OCI-LY7 (cell line): ENCODE measurements at regions of chr14 and their contacts with region 1.

Region 1: DNA sequence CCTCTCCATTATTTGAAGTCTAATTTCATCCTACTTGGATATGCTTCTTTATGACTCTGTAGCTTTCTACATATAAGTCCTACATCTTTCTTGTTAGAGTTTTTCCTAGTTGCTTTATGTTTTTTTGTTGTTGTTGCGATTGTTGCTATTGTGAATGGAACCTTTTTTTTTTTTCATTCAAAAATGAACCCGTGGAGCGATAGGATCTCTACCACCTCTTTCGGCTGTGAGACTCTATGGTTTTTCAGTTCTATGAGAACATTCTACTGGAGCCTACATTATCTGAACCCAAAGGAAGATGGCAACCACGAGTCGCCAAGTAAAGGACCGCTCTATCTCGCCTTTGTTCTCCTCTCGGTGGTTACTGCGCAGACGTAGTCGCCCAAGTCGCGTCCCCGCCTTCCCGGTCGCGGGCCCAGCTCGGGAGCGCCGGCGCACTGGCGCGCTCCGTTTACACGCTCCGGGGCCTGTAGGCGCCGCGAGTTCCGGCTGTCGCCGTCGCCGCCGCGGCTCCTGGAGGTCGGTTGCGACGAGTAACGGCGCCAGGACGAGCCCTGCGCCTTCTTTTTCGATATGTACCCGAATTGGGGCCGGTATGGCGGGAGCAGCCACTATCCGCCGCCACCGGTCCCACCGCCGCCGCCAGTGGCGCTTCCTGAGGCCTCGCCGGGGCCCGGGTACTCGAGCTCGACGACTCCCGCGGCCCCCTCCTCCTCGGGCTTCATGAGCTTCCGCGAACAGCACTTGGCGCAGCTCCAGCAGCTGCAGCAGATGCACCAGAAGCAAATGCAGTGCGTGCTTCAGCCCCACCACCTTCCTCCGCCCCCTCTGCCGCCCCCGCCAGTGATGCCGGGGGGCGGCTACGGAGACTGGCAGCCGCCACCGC is at the start of gene YLPM1:
- DNase-seq: peak; percentile 98
- H3K4me3 ChIP-seq: peak within 1 kb of the TSS; percentile 95
- H3K27ac ChIP-seq: peak within 1 kb of the TSS; percentile 72
- H3K4me1 ChIP-seq: peaks cover 39% of the 10 kb centered on the region
- CTCF ChIP-seq: peak; percentile 81
- total RNA-seq, gene YLPM1: 45.2 and 54.3 TPM in 2 replicates

Region 2: DNA sequence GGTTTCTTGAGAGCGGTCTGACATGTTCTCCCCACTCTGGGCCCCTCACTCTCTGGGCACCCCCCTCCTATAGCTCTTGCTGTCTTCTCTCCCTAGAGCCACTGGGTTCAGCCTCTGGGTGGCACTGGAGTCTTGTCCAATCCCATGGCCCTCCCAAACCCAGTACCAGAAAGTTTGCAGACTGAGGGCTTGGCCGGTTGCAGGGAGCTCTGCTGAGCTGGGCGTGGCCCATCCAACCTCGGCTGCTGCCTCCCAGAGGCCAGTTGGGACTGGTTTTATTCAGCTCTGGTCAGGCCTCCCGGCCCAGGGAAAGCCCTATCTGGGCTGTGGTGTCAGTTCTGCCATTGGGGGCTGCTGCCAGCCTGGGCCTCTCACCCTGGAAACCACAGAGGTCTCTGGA is 231.7 kb before region 1 on chr14:
- CTCF ChIA-PET with region 1: no interaction called
- POLR2A ChIA-PET with region 1: no interaction called
- intact Hi-C with region 1: no loop called
- DNase-seq: no peak
- H3K4me3 ChIP-seq: no peak overlapping the region
- H3K27ac ChIP-seq: no peak overlapping the region
- H3K4me1 ChIP-seq: peaks cover 4% of the 10 kb centered on the region
- CTCF ChIP-seq: 0 out of 2 replicates have a peak, but pooled peaks have one; percentile 20

Region 3: DNA sequence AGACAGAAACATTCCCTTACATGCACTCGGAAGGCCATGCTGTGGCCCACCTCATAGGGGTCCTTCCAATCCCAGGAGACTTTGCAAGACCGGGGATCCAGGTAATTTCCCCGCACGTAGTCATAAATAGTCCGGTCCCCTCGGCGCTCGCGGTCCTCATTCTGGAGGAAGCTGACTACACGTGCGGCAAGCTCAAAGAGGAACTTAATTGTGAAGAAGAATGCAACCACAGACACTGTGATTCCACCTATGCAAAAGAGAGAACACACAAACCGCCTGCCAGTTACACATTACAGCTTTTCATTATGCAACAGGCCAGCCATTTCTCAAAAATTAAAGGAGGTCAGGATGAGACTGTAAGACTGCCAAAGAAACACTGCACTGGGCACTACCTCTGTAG is 78.7 kb before region 1 on chr14:
- CTCF ChIA-PET with region 1: no interaction called
- POLR2A ChIA-PET with region 1: interaction called, 7 read pairs
- intact Hi-C with region 1: loop called (anchors 2 kb)
- DNase-seq: peak; percentile 92
- H3K4me3 ChIP-seq: peak overlapping the region; percentile 61
- H3K27ac ChIP-seq: peak overlapping the region; percentile 97
- H3K4me1 ChIP-seq: peaks cover 54% of the 10 kb centered on the region
- CTCF ChIP-seq: no peak

Region 4: DNA sequence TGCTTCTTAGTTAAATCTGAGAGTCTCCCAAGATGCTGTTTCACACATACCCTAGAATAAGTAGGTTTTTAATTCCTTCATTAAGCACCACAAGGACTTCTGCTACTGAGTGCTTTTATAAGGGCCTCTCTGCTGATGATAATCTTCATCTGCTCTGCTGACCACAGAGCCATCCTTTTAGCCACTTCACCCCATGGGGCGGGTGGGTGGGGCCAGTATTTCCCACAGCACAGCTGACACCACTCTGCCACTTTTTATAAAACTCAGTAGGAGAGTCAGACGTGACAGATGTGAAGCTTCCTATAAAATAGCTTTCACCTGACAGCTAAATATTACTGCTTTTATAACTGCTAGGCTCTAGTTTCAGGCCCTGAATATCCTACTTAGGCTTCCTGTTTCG is 29.9 kb before region 1 on chr14:
- CTCF ChIA-PET with region 1: no interaction called
- POLR2A ChIA-PET with region 1: interaction called, 11 read pairs
- intact Hi-C with region 1: no loop called
- DNase-seq: no peak
- H3K4me3 ChIP-seq: no peak overlapping the region
- H3K27ac ChIP-seq: no peak overlapping the region
- H3K4me1 ChIP-seq: no peaks in the 10 kb centered on the region
- CTCF ChIP-seq: no peak